ENCODE measurements at regions of chr14 and their contacts with region 1.

Region 1: DNA sequence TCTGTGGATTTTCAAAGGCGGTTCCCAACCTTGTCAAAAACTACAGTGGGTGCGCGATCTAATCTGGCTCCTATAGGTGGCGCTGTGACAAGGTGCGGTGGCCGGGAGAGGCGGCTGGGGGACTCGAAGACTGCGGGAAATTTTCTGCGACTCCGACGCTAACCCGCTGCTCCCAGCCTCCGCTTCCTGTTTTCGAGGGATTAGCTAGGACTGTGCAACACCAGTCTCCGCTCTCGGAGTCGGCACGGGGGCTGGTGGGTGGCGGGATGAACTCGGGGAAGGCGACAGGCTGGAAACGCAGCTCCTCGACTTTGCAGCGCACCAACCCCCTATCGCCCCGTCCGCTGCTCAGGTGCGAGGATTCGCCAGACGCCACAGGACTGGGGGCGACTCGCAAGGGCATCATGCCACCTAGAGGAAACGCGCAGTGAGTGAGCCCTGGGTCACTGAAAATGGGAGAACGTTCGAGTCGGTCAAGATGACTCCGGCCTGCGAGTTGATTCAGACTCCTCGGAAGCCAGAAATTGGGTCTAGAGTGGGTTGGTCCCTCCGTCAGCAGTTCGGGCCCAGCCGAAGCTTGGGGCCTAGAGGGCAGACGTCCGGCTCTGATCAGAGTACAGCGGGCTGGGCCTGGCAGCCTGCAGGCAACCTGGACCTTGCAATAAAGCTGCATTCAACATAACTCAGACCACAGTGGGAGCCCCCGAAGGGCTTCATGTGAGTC is 5.5 kb upstream of the PAX9 start:
- DNase-seq: no peak
- ATAC-seq: no peak
- H3K4me3 Mint-ChIP-seq: no peak overlapping the region
- H3K27ac Mint-ChIP-seq: no peak overlapping the region
- H3K4me1 Mint-ChIP-seq: peaks cover 16% of the 10 kb centered on the region
- H3K27me3 Mint-ChIP-seq: peaks cover 72% of the 10 kb centered on the region
- CTCF ChIP-seq: no peak

Region 2: GRCh38 chr14:36505181-36505815 is 150.8 kb before region 1 on chr14:
- CTCF ChIA-PET with region 1: no interaction called
- POLR2A ChIA-PET with region 1: no interaction called
- intact Hi-C with region 1: loop called (anchors 5 kb)
- DNase-seq: no peak
- ATAC-seq: no peak
- H3K4me3 Mint-ChIP-seq: no peak overlapping the region
- H3K27ac Mint-ChIP-seq: no peak overlapping the region
- H3K4me1 Mint-ChIP-seq: peaks cover 12% of the 10 kb centered on the region
- H3K27me3 Mint-ChIP-seq: peaks cover 63% of the 10 kb centered on the region
- CTCF ChIP-seq: no peak

Region 3: DNA sequence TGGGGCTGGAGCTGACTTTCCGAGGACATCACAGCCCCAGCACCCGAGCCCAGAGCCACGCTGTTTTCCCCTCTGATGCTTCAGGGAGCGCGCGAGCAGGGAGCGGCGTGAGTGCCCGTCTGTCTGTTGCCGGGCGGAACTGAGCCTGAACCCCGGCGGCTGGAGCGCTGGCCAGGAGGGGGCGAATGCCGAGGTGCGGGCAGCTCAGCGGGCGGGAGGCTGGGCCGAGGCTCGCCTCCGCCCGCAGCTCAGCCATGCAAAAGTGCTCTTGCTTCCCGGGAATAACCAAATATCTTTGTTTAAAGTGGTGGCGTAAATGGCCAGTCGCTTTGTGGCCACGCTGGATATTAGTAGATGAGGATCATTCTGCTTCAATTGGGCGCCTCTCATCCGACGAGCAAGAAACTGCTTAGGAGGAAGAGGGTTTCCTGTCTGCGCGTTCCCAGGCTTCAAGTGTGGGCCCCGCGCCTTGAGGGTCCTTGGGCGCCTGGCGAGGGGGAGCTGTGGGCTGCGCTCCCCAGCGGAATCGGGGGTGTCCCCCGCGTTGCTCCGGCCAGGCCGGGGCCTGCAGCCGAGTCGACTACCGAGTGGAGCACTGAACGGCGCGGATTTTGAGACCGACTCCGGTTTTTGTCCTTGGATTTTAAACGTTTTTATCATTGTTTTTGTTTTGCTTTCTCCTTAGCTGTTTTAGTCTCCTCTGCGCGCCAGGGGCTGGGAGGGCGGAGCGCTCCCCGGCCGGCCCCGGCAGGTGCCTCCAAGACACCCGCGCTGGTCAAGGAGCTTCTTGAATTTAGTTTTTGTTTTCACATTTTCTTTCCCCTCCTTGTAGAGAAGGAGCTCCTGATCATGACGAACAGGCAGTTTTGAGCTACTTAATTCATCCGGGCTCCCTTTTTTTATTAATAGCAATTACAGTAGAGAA is 135.3 kb before region 1 on chr14:
- CTCF ChIA-PET with region 1: no interaction called
- POLR2A ChIA-PET with region 1: no interaction called
- intact Hi-C with region 1: loop called (anchors 5 kb)
- DNase-seq: no peak
- ATAC-seq: no peak
- H3K4me3 Mint-ChIP-seq: no peak overlapping the region
- H3K27ac Mint-ChIP-seq: no peak overlapping the region
- H3K4me1 Mint-ChIP-seq: peaks cover 7% of the 10 kb centered on the region
- H3K27me3 Mint-ChIP-seq: peaks cover 50% of the 10 kb centered on the region
- CTCF ChIP-seq: no peak

Region 4: DNA sequence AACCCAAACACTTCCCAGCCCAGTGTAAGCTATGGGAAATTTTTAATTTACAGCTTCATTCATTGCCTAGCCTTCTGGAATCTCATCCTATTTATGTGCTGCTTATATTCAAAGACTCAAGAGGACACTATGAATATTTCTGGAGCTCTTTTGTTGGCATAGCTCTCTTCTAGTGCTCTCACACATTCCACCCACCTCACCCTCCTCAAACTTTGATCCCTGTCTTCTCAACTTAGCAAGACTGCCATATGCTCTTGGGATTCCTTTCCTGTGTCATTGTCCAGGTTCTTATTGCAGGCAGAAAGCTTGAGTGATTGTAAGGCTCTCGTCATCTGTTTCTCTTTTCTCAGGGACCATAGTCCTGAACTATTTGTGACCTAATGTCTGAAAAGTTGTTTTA is 118.1 kb before region 1 on chr14:
- CTCF ChIA-PET with region 1: no interaction called
- POLR2A ChIA-PET with region 1: no interaction called
- intact Hi-C with region 1: no loop called
- DNase-seq: no peak
- ATAC-seq: no peak
- H3K4me3 Mint-ChIP-seq: no peak overlapping the region
- H3K27ac Mint-ChIP-seq: no peak overlapping the region
- H3K4me1 Mint-ChIP-seq: no peaks in the 10 kb centered on the region
- H3K27me3 Mint-ChIP-seq: peaks cover 15% of the 10 kb centered on the region
- CTCF ChIP-seq: no peak

Region 5: DNA sequence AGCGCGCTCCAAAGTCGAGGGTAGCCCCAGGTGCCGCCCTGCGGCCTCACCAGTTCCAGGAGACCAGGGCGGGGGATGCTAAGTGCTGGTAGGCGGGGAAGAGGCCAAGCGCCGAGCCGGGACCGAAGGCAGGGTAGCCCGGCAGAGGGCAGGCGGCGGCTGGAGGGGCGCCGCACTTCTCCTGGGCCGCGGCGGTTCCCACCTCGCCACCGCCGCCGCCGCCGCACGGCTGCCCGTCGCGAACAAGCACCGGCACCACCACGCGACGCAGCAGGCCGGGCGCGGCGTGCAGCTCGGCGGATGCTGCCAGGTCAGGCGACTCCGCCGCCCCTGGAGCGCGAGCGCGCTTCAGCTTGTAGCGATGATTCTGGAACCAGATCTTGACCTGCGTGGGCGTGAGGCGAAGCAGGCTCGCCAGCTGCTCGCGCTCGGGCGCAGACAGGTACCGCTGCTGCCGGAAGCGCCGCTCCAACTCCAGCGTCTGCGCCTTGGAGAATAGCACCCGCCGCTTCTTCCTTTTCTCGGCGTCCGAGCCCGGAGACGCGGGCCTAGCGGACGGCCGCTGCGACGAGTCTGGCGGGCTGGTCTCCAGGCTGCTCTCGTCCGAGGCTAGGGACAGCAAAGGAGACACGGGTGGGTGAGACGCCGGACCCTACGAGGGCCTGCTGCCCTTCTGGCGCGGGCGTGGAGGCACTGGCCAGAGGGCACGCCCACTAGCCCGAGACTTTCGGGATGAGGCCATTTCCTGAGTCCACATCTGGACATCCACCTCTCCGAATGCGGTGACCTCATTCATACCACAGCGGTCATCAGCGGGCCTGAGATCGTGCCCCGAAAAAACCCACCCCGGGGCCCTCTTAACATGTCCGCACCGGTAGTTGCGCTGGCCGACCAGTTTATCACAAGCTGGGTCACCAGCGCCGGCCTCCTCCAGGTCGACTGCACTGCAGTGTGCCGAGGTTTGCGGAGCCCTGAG is 75.0 kb before region 1 on chr14:
- CTCF ChIA-PET with region 1: no interaction called
- POLR2A ChIA-PET with region 1: no interaction called
- intact Hi-C with region 1: loop called (anchors 5 kb)
- DNase-seq: no peak
- ATAC-seq: no peak
- H3K4me3 Mint-ChIP-seq: no peak overlapping the region
- H3K27ac Mint-ChIP-seq: no peak overlapping the region
- H3K4me1 Mint-ChIP-seq: no peaks in the 10 kb centered on the region
- H3K27me3 Mint-ChIP-seq: peaks cover 46% of the 10 kb centered on the region
- CTCF ChIP-seq: no peak

Region 6: DNA sequence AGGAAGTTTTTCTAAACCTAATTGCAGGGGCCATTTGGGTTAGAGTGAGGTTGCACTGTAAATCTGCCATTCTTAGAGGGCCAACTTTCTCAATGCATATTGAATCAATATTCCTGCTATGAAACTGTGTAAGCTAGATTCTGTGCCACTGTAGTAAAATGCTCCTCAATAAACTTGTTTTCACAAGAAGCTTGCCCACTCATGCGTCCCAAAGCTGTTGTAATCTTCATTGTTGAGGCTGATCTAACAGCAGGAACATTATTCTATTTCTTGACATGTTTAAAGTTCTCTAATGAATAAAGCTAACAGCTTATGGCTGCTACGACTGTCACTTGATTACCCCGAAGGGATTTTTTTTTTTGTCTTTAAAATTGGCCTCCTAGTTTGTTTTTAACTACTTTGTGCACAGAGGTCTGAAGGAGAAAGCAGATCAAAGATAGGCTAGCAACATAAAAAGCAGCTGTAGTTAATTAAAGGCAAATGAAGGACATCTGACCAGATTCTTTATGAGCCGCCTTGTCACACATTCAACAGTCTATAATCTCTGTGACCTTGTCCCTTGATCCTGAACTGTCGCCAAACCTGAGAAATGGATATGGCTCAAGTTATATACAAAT is 249.3 kb after region 1 on chr14:
- CTCF ChIA-PET with region 1: no interaction called
- POLR2A ChIA-PET with region 1: no interaction called
- intact Hi-C with region 1: no loop called
- DNase-seq: no peak
- ATAC-seq: no peak
- H3K4me3 Mint-ChIP-seq: no peak overlapping the region
- H3K27ac Mint-ChIP-seq: no peak overlapping the region
- H3K4me1 Mint-ChIP-seq: no peaks in the 10 kb centered on the region
- H3K27me3 Mint-ChIP-seq: no peaks in the 10 kb centered on the region
- CTCF ChIP-seq: no peak

Region 7: DNA sequence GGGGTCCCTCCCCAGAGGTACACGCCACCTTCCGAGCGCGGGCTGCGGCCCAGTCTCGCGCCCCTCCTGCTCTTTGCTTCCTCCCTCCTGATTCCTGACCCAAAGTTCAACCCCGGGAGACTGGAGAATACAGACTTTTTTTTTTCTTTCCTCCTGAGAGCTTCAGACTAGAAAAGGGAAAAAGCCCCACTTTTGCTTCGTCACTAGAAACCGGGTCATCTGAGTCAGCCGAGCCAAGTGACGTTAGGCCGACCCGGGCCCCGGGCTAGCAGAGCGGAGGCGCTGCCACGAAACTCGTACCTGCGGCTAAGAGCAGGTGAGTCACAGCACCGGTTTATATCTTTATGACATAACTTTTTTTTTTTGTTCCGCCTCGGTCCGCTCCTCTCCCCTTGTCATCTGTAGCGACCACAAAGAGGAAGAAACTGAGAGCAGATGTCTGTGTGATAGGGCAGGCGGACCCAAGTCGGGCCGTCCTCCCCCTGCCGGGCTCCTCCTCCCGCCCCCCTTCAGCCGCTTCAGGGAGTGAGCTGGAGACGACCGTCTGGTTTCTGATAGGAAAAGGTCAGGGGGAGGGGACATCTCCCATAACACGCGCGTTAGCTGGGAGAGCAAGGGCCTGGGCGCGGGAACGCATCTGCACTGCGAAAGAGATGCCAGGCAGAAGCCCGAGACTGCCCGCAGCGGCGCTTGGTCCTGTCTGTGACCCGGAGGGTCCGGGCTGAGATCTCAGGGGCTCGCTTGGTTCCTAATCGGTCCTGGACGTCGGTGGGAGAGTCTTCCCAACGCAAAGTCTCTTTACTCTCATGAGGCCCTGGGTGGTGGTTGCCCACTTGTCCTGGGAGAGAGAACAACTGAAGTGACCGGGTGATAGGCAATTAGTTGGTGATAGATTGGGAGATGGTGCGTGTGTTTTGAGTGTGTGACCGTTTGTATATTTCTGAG is 939.8 kb after region 1 on chr14:
- CTCF ChIA-PET with region 1: no interaction called
- POLR2A ChIA-PET with region 1: no interaction called
- intact Hi-C with region 1: loop called (anchors 5 kb)
- DNase-seq: no peak
- ATAC-seq: peak; percentile 50
- H3K4me3 Mint-ChIP-seq: peak overlapping the region; percentile 63
- H3K27ac Mint-ChIP-seq: peak overlapping the region; percentile 71
- H3K4me1 Mint-ChIP-seq: peaks cover 21% of the 10 kb centered on the region
- H3K27me3 Mint-ChIP-seq: peaks cover 60% of the 10 kb centered on the region
- CTCF ChIP-seq: no peak

Measured in activated B cell treated with CpG ODN at 0.5 μM for 24 hours (primary cell).